ENCODE measurements at regions of chr11 and their contacts with region 1.

Region 1: GRCh38 chr11:79493555-79494171 is 52.8 kb upstream of the TENM4 start:
- DNase-seq: peak; percentile 48
- ATAC-seq: peak; percentile 95
- H3K4me3 ChIP-seq: no peak overlapping the region
- H3K27ac ChIP-seq: no peak overlapping the region
- H3K4me1 ChIP-seq: no peaks in the 10 kb centered on the region
- H3K27me3 ChIP-seq: peaks cover 3% of the 10 kb centered on the region; the same call in 1 of the 2 replicates
- CTCF ChIP-seq: peak; percentile 98

Region 2: GRCh38 chr11:79461144-79461543 is 32.5 kb before region 1 on chr11:
- CTCF ChIA-PET with region 1: no interaction called
- POLR2A ChIA-PET with region 1: no interaction called
- in situ Hi-C with region 1: no loop called
- intact Hi-C with region 1: loop called (anchors 2 kb)
- DNase-seq: peak; percentile 5
- ATAC-seq: peak; percentile 84
- H3K4me3 ChIP-seq: no peak overlapping the region
- H3K27ac ChIP-seq: no peak overlapping the region
- H3K4me1 ChIP-seq: no peaks in the 10 kb centered on the region
- H3K27me3 ChIP-seq: peaks cover 4% of the 10 kb centered on the region; the same call in 1 of the 2 replicates
- CTCF ChIP-seq: peak; percentile 70

Region 3: GRCh38 chr11:80638296-80638695 is 1144.6 kb after region 1 on chr11:
- CTCF ChIA-PET with region 1: interaction called, 15 read pairs
- POLR2A ChIA-PET with region 1: no interaction called
- in situ Hi-C with region 1: no loop called
- intact Hi-C with region 1: no loop called
- DNase-seq: no peak
- ATAC-seq: no peak
- H3K4me3 ChIP-seq: no peak overlapping the region
- H3K27ac ChIP-seq: no peak overlapping the region
- H3K4me1 ChIP-seq: no peaks in the 10 kb centered on the region
- H3K27me3 ChIP-seq: no peaks in the 10 kb centered on the region
- CTCF ChIP-seq: no peak

Measured in Panc1 (cell line).